Heart right ventricle (tissue), 16 donors: ENCODE measurements at regions of chr20 and their contacts with region 1.

Region 1: GRCh38 chr20:22805219-22805618 is 220.8 kb upstream of the FOXA2 start:
- DNase-seq: peak in 1 of 2 donors; percentile 54
- ATAC-seq: peak; percentile 61 to 86 (median 71)
- H3K4me3 ChIP-seq: no peak overlapping the region
- H3K27ac ChIP-seq: peak overlapping the region in 1 of 10 donors; percentile 21
- H3K4me1 ChIP-seq: peaks cover 0 to 32% (median 0%) of the 10 kb centered on the region in 9 donors
- H3K27me3 ChIP-seq: peaks cover 0 to 12% (median 0%) of the 10 kb centered on the region in 7 donors
- CTCF ChIP-seq: no peak

Region 2: DNA sequence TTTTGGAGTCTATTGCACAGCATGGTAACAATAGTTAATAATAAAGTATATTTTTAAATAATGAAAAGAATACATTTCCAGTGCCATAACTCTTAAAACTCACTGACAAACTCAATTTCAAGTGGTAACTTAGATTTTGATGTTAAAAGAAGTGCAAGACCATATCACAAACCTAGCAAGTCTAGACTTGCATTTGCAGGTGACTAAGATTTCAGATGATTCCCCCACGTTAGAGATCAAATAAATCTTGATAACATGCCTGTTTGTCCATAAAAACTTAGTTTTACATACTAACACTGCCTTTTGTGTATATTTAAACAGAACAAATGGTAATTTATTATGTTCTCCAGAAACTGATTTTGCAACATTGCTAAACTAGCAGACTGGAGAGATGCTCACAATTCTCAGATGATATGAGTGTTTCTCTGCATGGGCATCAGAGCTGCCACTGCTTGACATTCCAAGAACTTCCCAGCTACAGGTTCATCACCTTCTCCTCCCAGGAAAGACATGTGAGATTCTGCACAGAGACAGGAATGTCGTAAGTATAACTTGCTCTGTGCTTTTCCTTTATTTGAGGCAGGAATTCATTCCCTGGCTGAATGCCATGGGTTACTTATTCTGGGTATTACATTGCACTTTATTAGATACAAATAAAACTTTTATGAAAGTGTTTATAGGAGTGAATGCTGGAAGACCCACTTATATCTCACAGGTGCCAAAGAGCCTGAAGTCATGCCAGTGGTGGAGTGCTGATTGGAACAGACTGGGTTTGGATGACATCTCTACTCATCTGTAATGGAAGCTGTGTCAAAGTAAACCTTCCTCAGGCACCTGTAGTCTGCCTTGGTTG is 60.7 kb before region 1 on chr20:
- intact Hi-C with region 1: loop called in 1 of 10 experiments (anchors 10 kb)
- DNase-seq: no peak
- ATAC-seq: no peak
- H3K4me3 ChIP-seq: no peak overlapping the region
- H3K27ac ChIP-seq: no peak overlapping the region
- H3K4me1 ChIP-seq: no peaks in the 10 kb centered on the region
- H3K27me3 ChIP-seq: no peaks in the 10 kb centered on the region
- CTCF ChIP-seq: no peak

Region 3: DNA sequence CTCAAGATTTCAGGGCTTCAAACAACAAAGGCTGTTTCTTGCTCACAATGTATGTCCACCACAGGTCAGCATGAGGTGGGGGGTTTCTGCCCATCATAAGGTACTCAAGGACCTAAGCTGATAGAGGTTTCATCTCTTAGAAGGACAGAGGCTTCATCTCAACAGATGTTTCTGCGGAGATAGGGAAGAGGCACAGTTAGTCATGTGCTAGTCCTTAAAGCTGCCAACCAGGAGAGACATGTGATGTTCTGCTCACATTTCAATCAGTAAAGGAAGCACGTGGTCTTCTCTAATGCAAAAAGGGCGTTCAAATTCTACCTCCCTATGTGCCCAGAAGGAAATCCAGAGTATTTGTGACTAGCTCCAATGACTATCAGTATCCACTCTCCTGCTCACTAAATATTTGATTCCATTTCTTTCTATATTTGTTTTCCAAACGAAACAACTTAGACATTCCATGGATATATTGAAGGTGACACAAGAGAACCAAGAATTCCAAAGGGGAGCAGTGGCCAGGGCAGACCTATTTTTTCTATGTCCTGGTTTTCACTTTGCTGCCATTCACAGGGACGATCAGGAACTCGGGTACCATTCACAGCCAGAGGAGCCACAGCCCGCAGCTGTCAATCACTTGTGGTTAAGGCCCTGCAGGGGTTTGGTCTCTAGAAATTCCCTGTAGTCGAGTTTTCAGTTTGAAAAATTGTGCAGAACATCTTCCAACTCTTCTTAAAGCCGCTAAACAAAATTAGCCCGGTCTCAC is 47.6 kb before region 1 on chr20:
- intact Hi-C with region 1: no loop called
- DNase-seq: no peak
- ATAC-seq: no peak
- H3K4me3 ChIP-seq: no peak overlapping the region
- H3K27ac ChIP-seq: no peak overlapping the region
- H3K4me1 ChIP-seq: peaks cover 0 to 4% (median 0%) of the 10 kb centered on the region in 9 donors
- H3K27me3 ChIP-seq: no peaks in the 10 kb centered on the region
- CTCF ChIP-seq: no peak